Sigmoid colon (tissue), 7 donors: ENCODE measurements at regions of chr18 and their contacts with region 1.

Region 1: DNA sequence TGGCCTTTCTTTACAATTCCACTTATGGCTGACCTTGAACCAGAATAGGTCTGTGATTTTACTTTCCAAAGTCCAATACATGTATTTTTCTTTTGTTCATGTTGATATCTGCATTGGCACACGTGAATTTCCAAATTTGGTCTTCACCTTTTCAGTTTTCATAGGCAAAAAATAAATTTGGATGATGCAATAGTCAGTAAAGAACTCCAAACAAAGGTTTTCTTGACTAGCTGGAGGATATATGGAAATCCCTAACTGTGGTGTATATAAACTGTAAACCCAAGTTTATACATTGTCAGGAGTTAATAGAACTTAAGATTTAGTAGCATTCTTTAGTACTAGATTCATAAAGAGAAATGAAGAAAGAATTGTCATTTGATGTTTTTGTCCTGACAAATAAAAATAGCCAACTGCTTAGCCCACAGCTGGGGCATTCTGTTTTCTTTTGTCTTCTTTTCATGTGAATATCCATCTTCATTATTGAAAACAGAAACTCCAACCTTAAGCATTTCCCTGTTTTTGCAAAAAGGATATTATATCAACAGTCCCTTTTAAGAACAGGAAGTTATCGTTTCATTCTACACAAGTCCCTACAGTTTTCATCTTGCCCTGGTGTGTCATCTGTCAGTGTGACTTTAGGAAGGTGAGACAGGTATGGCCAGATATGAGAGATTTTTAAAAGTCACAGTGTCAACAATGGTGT is 132.9 kb downstream of the BCL2 start:
- DNase-seq: no peak
- H3K4me3 ChIP-seq: no peak overlapping the region
- H3K27ac ChIP-seq: peak overlapping the region in 2 of 4 donors; percentile 49 to 70
- H3K4me1 ChIP-seq: peaks cover 0 to 58% (median 49%) of the 10 kb centered on the region in 4 donors
- H3K27me3 ChIP-seq: no peaks in the 10 kb centered on the region
- CTCF ChIP-seq: no peak
- EP300 ChIP-seq: no peak
- POLR2A ChIP-seq: no peak

Region 2: DNA sequence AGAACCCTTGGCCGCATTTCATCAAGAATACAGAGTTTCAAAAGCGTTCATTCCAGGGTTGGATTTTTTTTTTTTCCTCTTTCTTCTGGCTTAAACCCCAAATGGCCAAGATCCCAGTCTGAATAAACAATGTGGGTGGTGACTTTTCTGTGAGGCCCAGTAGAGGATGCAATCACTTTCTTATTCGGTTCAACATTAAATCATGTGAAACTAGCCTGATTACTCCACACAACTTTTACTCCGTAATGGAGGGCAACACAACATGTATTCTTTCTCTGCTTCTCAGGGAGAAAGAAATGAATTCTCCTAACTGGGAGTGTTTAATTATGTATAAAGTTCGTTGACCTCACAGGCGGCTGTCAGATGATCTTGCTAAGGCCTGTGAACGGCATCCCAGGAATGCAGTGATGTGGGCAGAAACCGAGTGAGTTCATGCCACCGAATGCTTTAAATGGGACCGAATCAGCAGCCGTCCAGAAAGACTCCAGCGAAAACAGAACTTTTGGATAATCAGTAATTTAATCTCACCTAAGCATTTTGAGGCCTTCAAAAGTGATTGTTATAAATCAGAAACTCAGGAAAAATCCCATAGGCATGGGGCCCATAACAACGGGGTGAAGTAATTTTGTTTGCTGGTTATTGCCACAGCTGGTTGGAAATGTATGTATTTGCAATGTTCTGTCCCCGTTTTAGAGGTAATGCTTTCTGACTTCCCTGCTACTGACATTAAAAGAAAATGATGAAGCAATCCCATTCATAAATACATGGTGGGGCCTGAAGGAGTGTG is 51.4 kb after region 1 on chr18:
- intact Hi-C with region 1: loop called (anchors 5 kb)
- DNase-seq: no peak
- H3K4me3 ChIP-seq: peak overlapping the region in 2 of 4 donors; percentile 14 to 17
- H3K27ac ChIP-seq: peak overlapping the region; percentile 78 to 88 (median 84)
- H3K4me1 ChIP-seq: peaks cover 0 to 34% (median 24%) of the 10 kb centered on the region in 4 donors
- H3K27me3 ChIP-seq: no peaks in the 10 kb centered on the region
- CTCF ChIP-seq: no peak
- EP300 ChIP-seq: peak in 1 of 4 donors; percentile 27
- POLR2A ChIP-seq: no peak